Activated CD4-positive, alpha-beta memory T cell treated with anti-CD3 and anti-CD28 coated beads for 36 hours (primary cell): ENCODE measurements at regions of chr2 and their contacts with region 1.

Region 1: DNA sequence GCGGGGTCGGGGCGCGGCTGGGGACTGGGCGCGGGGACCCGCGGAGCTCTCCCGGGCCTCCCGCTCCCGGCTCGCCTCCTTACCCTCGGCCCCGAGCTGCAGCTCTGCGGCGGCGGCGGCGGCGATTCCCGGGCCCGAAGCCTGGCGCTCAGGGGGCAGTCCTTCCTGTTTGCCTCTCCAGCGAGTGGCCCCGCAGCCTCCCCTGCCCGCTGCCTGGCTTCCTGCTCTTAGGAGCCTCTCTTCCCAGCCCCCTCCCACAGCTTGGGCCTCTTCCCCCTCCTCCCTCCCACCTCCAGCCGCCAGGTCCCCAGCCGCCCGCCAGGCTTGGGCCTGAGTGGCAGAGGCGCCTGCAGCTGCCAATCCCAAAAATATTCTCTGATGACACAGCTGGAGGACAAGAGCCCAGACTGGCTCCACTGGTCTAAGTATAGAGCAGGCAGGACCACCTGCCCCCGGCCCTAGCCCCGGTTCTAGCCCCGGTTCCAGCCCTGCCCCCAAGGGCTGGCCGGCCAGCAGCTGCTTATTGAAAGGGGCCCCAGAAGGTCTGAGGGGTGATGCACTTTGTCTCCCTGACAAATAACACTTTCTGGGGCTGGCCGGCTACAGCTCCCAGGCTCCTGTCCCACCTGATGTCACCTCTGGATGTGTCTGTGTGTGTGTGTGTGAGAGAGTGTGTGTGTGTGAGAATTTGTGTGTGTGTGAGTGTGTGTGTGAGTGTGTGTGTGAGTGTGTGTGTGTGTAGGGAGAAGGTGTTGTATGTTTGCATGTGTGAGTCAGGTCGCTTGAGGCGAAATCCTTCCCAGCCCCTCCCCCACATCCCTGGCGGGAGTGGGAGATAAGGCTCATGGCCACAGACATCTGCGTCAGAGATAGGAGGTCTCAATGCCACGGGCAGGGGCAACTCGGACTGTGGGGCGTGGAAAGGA is at the start of gene OBSL1:
- DNase-seq: no peak
- H3K4me3 Mint-ChIP-seq: peak within 1 kb of the TSS; percentile 37
- H3K27ac Mint-ChIP-seq: no peak within 1 kb of the TSS
- H3K4me1 Mint-ChIP-seq: no peaks in the 10 kb centered on the region
- H3K27me3 Mint-ChIP-seq: peaks cover 38% of the 10 kb centered on the region
- total RNA-seq, gene OBSL1: 0.83 to 0.94 TPM

Region 2: GRCh38 chr2:219041252-219041651 is 530.3 kb before region 1 on chr2 and contains the start of gene CFAP65:
- CTCF ChIA-PET with region 1: no interaction called
- POLR2A ChIA-PET with region 1: no interaction called
- intact Hi-C with region 1: no loop called
- DNase-seq: peak; percentile 52
- H3K4me3 Mint-ChIP-seq: peak within 1 kb of the TSS; percentile 55
- H3K27ac Mint-ChIP-seq: no peak within 1 kb of the TSS
- H3K4me1 Mint-ChIP-seq: peaks cover 10% of the 10 kb centered on the region
- H3K27me3 Mint-ChIP-seq: peaks cover 38% of the 10 kb centered on the region
- total RNA-seq, gene CFAP65: not detected

Region 3: GRCh38 chr2:219560037-219560892 is 11.3 kb before region 1 on chr2:
- CTCF ChIA-PET with region 1: interaction called, 24 read pairs
- POLR2A ChIA-PET with region 1: no interaction called
- intact Hi-C with region 1: no loop called
- DNase-seq: peak; percentile 21
- H3K4me3 Mint-ChIP-seq: no peak overlapping the region
- H3K27ac Mint-ChIP-seq: no peak overlapping the region
- H3K4me1 Mint-ChIP-seq: no peaks in the 10 kb centered on the region
- H3K27me3 Mint-ChIP-seq: peaks cover 15% of the 10 kb centered on the region

Region 4: DNA sequence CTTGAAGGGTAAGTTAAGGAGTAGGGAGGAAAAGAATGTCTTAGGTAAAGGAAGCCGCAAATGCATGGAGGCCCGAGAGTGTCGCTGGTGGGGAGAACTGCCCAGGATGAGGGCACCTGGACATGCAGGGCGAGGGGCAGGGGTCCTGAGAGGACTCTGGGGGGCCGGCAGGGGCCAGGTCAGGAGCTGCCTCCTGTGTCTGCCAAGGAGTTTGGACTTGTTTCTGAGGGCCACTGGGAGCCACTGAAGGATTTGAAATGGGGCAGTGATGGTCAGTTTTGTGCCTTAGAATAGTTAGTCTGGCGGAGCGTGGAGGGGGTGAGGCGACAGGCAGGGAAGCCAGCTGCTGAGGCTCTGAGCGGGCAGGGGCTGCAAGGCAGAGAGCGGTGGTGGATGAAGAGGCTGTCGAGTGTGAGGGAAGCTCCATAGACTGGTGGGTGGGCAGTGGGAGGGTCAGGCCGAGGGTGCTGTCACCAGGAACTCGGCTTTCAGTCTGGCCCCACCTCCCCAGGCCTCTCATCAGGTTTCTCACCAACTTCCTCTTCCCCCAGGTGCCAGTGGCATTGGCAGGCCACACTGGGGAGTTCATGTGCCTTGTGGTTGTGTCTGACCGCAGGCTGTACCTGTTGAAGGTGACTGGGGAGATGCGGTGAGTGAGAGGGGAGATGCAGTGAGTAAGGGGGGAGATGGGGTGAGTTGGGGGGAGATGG is 41.2 kb after region 1 on chr2:
- CTCF ChIA-PET with region 1: no interaction called
- POLR2A ChIA-PET with region 1: no interaction called
- intact Hi-C with region 1: no loop called
- DNase-seq: no peak
- H3K4me3 Mint-ChIP-seq: no peak overlapping the region
- H3K27ac Mint-ChIP-seq: no peak overlapping the region
- H3K4me1 Mint-ChIP-seq: peaks cover 6% of the 10 kb centered on the region
- H3K27me3 Mint-ChIP-seq: no peaks in the 10 kb centered on the region

Region 5: DNA sequence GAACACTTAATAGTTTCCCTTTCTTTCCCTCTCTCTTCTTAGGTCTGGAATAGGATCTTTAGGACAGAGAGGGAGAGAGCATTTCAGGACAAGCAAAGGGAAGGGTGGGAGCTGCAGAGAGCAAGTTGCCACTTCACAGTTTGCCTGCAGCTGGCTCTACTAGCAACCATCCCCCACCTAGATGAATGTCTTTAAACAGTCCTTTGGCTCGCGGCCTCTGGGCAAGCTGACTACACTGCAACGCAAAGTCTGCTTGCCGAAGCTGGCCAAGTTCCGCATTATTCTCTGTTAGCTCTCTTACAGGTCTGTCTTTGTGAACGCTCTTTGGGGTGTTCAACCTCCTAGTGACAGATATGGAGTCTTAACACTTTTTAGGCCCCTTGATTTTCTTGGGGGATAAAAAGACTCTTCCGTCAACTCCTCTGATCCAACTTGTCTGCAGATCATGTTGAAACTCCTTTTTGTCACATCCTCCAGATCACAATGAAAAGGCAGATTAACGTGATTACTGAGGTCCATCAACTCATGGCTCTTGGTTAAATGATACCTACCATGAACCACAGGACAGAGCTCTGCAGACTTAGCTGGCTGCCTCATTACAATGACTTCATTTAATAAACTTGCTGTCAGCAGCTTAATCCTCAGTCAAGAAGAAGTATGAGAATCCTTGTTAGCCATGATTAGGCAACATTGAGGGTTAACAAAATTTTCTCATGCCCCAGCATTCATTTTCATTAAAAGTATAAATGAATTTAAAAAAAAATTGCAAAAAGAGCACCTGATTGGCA is 130.5 kb after region 1 on chr2:
- CTCF ChIA-PET with region 1: no interaction called
- POLR2A ChIA-PET with region 1: no interaction called
- intact Hi-C with region 1: no loop called
- DNase-seq: no peak
- H3K4me3 Mint-ChIP-seq: no peak overlapping the region
- H3K27ac Mint-ChIP-seq: no peak overlapping the region
- H3K4me1 Mint-ChIP-seq: no peaks in the 10 kb centered on the region
- H3K27me3 Mint-ChIP-seq: peaks cover 28% of the 10 kb centered on the region

Region 6: GRCh38 chr2:219887870-219888269 is 316.3 kb after region 1 on chr2:
- CTCF ChIA-PET with region 1: no interaction called
- POLR2A ChIA-PET with region 1: no interaction called
- intact Hi-C with region 1: no loop called
- DNase-seq: no peak
- H3K4me3 Mint-ChIP-seq: no peak overlapping the region
- H3K27ac Mint-ChIP-seq: no peak overlapping the region
- H3K4me1 Mint-ChIP-seq: no peaks in the 10 kb centered on the region
- H3K27me3 Mint-ChIP-seq: peaks cover 10% of the 10 kb centered on the region